SK-N-SH (cell line): ENCODE measurements at regions of chr13 and their contacts with region 1.

Region 1: GRCh38 chr13:46160471-46161066 is 21.4 kb downstream of the LCP1 start:
- DNase-seq: peak; percentile 75
- H3K4me3 ChIP-seq: no peak overlapping the region
- H3K27ac ChIP-seq: no peak overlapping the region
- H3K4me1 ChIP-seq: no peaks in the 10 kb centered on the region
- H3K27me3 ChIP-seq: no peaks in the 10 kb centered on the region
- CTCF ChIP-seq: peak; percentile 82
- EP300 ChIP-seq: no peak
- RAD21 ChIP-seq: peak; percentile 75

Region 2: GRCh38 chr13:45623515-45624090 is 537.0 kb before region 1 on chr13:
- CTCF ChIA-PET with region 1: interaction called, 21 read pairs
- POLR2A ChIA-PET with region 1: no interaction called
- DNase-seq: peak; percentile 39
- H3K4me3 ChIP-seq: no peak overlapping the region; a peak in 1 of 4 replicates
- H3K27ac ChIP-seq: no peak overlapping the region
- H3K4me1 ChIP-seq: peaks cover 0 to 5% of the 10 kb centered on the region in 2 experiments; a peak in 2 of 4 replicates
- H3K27me3 ChIP-seq: no peaks in the 10 kb centered on the region
- CTCF ChIP-seq: peak; percentile 69
- EP300 ChIP-seq: no peak
- RAD21 ChIP-seq: peak; percentile 71

Region 3: GRCh38 chr13:45807520-45808099 is 353.0 kb before region 1 on chr13:
- CTCF ChIA-PET with region 1: interaction called, 13 read pairs
- POLR2A ChIA-PET with region 1: no interaction called
- DNase-seq: peak; percentile 65
- H3K4me3 ChIP-seq: no peak overlapping the region
- H3K27ac ChIP-seq: no peak overlapping the region
- H3K4me1 ChIP-seq: peaks cover 7 to 15% of the 10 kb centered on the region in 2 experiments; a peak in 3 of 4 replicates
- H3K27me3 ChIP-seq: no peaks in the 10 kb centered on the region
- CTCF ChIP-seq: peak; percentile 64
- EP300 ChIP-seq: no peak
- RAD21 ChIP-seq: peak; percentile 91

Region 4: GRCh38 chr13:46050771-46051170 is 109.8 kb before region 1 on chr13:
- CTCF ChIA-PET with region 1: no interaction called
- POLR2A ChIA-PET with region 1: no interaction called
- DNase-seq: no peak
- H3K4me3 ChIP-seq: peak overlapping the region; percentile 97; a peak in 3 of 4 replicates
- H3K27ac ChIP-seq: no peak overlapping the region
- H3K4me1 ChIP-seq: peaks cover 0 to 17% of the 10 kb centered on the region in 2 experiments; a peak in 1 of 4 replicates
- H3K27me3 ChIP-seq: no peaks in the 10 kb centered on the region
- CTCF ChIP-seq: no peak
- EP300 ChIP-seq: no peak
- RAD21 ChIP-seq: no peak

Region 5: DNA sequence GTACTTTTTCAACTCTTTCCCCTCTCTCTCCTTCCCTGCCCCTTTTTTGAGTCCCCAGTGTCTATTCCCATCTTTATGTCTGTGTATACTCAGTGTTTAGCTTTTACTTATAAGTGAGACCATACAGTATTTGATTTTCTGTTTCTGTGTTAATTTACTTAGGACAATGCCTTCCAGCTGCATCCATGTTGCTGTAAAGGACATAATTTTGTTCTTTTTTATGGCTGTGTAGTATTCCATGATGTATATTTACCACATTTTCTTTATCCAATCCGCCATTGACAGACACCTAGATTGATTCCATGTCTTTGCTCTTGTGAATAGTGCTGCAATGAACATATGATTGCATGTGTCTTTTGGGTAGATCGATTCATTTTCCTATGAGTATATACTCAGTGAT is 97.3 kb before region 1 on chr13:
- CTCF ChIA-PET with region 1: no interaction called
- POLR2A ChIA-PET with region 1: no interaction called
- DNase-seq: no peak
- H3K4me3 ChIP-seq: no peak overlapping the region
- H3K27ac ChIP-seq: no peak overlapping the region
- H3K4me1 ChIP-seq: no peaks in the 10 kb centered on the region; a peak in 1 of 4 replicates
- H3K27me3 ChIP-seq: no peaks in the 10 kb centered on the region
- CTCF ChIP-seq: no peak
- EP300 ChIP-seq: no peak
- RAD21 ChIP-seq: no peak

Region 6: DNA sequence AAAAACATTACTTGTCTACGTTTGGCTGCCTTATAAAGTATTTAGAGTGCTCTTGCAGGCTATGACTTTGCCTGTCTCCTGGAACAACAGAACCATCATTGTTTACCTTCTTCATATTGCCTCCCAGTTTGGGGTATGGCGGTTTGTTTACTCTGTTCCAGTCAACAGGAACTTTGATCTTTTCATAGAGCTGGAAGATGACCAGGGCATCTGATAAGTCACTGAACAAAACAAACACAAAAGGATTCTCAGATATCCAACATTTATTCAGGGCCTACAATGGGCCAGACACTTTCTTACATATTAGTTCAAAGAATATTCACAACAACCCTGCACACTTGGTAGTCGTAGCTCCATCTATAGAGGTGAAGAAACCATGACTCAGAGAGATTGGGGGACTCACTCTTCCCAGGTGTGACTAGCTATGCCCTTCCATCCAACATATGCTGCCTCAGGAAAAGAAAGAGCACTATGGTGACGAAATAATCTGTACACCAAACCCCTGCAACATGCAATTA is 17.3 kb before region 1 on chr13:
- CTCF ChIA-PET with region 1: interaction called, 44 read pairs
- POLR2A ChIA-PET with region 1: no interaction called
- DNase-seq: no peak
- H3K4me3 ChIP-seq: no peak overlapping the region
- H3K27ac ChIP-seq: no peak overlapping the region
- H3K4me1 ChIP-seq: no peaks in the 10 kb centered on the region; a peak in 2 of 4 replicates
- H3K27me3 ChIP-seq: no peaks in the 10 kb centered on the region
- CTCF ChIP-seq: no peak
- EP300 ChIP-seq: no peak
- RAD21 ChIP-seq: no peak

Region 7: DNA sequence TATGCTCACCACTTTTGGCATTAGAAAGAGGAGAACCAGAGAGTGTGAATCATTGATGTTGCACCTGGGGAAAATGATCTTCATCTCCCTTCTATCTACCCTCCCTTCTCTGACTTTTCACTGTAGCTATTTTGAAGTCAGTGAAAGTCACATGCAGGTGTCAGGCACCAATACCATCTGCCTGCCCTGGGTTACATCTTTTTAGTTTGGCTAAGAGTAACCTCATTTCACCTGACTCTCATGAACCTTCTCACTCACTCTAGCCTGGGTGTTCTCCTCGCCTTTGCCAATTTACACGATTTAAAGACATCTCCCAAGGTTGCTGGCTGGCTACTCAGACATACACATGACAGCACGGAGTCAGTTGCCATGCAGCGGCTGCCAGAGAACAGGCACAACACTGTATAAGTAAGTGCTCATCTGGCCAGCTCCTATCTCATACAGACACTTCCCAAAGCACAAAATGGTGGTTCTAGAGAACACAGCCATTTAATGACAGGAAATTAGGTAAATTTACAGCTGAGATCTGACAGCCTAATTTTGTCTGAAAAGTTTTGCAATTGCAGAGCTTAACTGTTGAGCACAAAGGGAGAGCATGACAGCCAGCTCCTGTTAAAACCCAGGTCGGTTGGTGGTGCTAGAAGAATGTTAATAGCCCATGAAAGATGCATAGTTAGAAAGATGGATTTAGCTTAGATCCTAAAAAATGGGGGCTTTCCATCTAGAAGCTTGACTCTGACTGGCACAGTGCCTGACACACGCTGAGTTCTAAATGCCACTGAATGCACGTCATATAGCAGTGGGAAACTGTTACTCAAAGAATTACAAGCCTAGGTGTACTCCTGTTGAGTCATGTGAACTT is 11.1 kb before region 1 on chr13:
- CTCF ChIA-PET with region 1: interaction called, 44 read pairs
- POLR2A ChIA-PET with region 1: no interaction called
- DNase-seq: no peak
- H3K4me3 ChIP-seq: no peak overlapping the region
- H3K27ac ChIP-seq: no peak overlapping the region
- H3K4me1 ChIP-seq: no peaks in the 10 kb centered on the region; a peak in 2 of 4 replicates
- H3K27me3 ChIP-seq: no peaks in the 10 kb centered on the region
- CTCF ChIP-seq: no peak
- EP300 ChIP-seq: no peak
- RAD21 ChIP-seq: no peak

Region 8: DNA sequence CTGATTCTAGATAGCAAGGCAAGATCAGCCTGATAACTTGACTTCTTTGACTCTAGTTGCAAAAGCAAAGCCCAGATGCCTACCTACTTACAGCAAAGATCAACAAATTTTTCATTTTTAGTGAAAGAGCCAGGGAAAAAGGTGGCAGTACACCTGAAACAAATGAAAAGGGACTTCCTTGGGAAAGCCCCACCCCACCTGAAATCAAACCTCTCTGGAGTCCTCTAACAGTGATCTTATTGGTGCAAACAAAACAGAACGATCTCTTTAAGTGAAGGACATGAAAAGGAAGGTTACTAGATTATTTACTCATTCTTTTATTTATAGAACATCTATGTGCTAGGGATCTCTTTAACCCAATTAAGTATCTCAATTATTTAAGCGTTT is 21.9 kb after region 1 on chr13:
- CTCF ChIA-PET with region 1: no interaction called
- POLR2A ChIA-PET with region 1: no interaction called
- DNase-seq: no peak
- H3K4me3 ChIP-seq: no peak overlapping the region
- H3K27ac ChIP-seq: no peak overlapping the region
- H3K4me1 ChIP-seq: no peaks in the 10 kb centered on the region; a peak in 1 of 4 replicates
- H3K27me3 ChIP-seq: no peaks in the 10 kb centered on the region
- CTCF ChIP-seq: no peak
- EP300 ChIP-seq: no peak
- RAD21 ChIP-seq: no peak

Region 9: GRCh38 chr13:46288570-46289259 is 128.1 kb after region 1 on chr13:
- CTCF ChIA-PET with region 1: interaction called, 16 read pairs
- POLR2A ChIA-PET with region 1: no interaction called
- DNase-seq: peak; percentile 39
- H3K4me3 ChIP-seq: peak overlapping the region in 1 of 2 experiments; percentile 13; a peak in 1 of 4 replicates
- H3K27ac ChIP-seq: no peak overlapping the region
- H3K4me1 ChIP-seq: no peaks in the 10 kb centered on the region
- H3K27me3 ChIP-seq: no peaks in the 10 kb centered on the region
- CTCF ChIP-seq: peak; percentile 74
- EP300 ChIP-seq: no peak
- RAD21 ChIP-seq: peak; percentile 72

Region 10: GRCh38 chr13:46321494-46322225 is 161.1 kb after region 1 on chr13:
- CTCF ChIA-PET with region 1: interaction called, 10 read pairs
- POLR2A ChIA-PET with region 1: no interaction called
- DNase-seq: peak; percentile 52
- H3K4me3 ChIP-seq: no peak overlapping the region
- H3K27ac ChIP-seq: no peak overlapping the region
- H3K4me1 ChIP-seq: no peaks in the 10 kb centered on the region
- H3K27me3 ChIP-seq: no peaks in the 10 kb centered on the region
- CTCF ChIP-seq: peak; percentile 87
- EP300 ChIP-seq: no peak
- RAD21 ChIP-seq: peak; percentile 85